Activated CD8-positive, alpha-beta memory T cell treated with anti-CD3 and anti-CD28 coated beads, Interleukin-2, amount 10 ng/mL, durations not matched to agents 7 days and 5 days (primary cell): ENCODE measurements at regions of chr15 and their contacts with region 1.

Region 1: GRCh38 chr15:90306560-90306959 is 41.1 kb downstream of the NGRN start:
- DNase-seq: peak; percentile 74
- ATAC-seq: peak; percentile 96
- H3K4me3 Mint-ChIP-seq: peak overlapping the region; percentile 5
- H3K27ac Mint-ChIP-seq: peak overlapping the region; percentile 54
- H3K4me1 Mint-ChIP-seq: peaks cover 32% of the 10 kb centered on the region
- H3K27me3 Mint-ChIP-seq: peaks cover 9% of the 10 kb centered on the region

Region 2: GRCh38 chr15:89876396-89877082 is 430.0 kb before region 1 on chr15:
- CTCF ChIA-PET with region 1: no interaction called
- DNase-seq: no peak
- ATAC-seq: no peak
- H3K4me3 Mint-ChIP-seq: no peak overlapping the region
- H3K27ac Mint-ChIP-seq: no peak overlapping the region
- H3K4me1 Mint-ChIP-seq: peaks cover 3% of the 10 kb centered on the region
- H3K27me3 Mint-ChIP-seq: no peaks in the 10 kb centered on the region

Region 3: GRCh38 chr15:90106522-90107117 is 199.9 kb before region 1 on chr15:
- CTCF ChIA-PET with region 1: no interaction called
- DNase-seq: no peak
- ATAC-seq: no peak
- H3K4me3 Mint-ChIP-seq: no peak overlapping the region
- H3K27ac Mint-ChIP-seq: no peak overlapping the region
- H3K4me1 Mint-ChIP-seq: peaks cover 6% of the 10 kb centered on the region
- H3K27me3 Mint-ChIP-seq: peaks cover 4% of the 10 kb centered on the region

Region 4: DNA sequence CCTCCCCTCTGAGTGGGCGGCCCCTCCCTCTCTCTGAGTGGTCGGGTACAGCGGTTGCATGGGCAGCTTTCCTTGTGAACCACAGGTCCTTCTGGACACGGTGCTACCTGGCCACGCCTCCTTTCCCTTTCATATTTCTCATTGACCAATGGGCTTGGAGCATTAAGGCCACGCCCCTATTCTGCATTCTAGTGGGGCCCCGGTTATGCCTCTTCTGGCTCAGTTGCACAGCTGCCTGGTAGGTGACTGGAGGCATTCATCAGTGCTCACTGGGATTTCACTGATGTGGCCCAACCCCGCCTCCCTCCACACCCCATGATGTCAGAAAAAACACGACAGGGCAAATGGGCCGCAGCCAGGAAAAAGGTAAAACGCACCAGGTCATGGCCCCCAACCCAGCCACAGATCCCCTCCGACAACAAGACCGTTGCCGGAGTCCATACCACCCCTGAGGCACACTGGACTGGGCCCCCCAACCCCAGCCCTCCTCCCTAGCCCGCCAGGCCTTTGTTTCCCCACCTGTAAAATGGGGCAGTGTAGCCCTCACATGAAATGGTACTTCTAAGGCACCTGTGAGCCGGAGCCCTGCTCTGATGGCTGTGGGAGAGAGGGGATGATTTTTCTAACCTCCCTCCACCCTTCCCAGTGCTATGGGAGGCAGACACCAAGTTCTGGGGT is 14.7 kb before region 1 on chr15:
- CTCF ChIA-PET with region 1: interaction called, 28 read pairs
- DNase-seq: peak; percentile 55
- ATAC-seq: no peak
- H3K4me3 Mint-ChIP-seq: no peak overlapping the region
- H3K27ac Mint-ChIP-seq: no peak overlapping the region
- H3K4me1 Mint-ChIP-seq: peaks cover 18% of the 10 kb centered on the region
- H3K27me3 Mint-ChIP-seq: peaks cover 10% of the 10 kb centered on the region